ENCODE measurements at regions of chr20 and their contacts with region 1.

Region 1: DNA sequence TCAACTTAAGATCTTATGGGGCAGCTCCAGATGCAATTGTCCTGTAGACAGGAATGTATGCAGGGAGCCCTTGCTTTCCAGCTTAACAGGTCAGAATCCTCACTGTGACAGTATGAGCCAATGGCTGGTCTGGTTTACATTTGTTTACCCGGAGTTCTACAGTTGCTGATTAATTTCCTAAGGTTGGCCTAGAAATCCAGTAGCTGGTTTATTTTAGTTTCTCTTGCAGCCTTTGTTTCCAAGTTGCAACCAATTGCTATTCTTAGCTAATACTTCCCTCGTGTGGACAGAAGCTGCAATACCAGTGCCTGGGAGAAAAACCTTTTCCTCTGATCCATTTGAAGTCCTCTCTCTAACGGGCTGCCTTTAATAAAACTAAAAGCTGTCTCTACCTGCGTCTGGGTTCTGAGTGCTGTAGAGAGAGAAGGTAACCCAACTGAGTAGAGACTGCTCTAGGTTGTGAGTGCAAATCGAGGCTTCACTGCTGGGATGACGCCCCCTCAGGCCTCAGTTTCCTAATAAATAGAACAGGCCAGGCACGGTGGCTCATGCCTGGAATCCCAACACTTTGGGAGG is 45.9 kb downstream of the ZNF217 start:
- DNase-seq: peak; percentile 28
- H3K4me3 Mint-ChIP-seq: no peak overlapping the region
- H3K27ac Mint-ChIP-seq: no peak overlapping the region
- H3K4me1 Mint-ChIP-seq: no peaks in the 10 kb centered on the region
- H3K27me3 Mint-ChIP-seq: no peaks in the 10 kb centered on the region

Region 2: DNA sequence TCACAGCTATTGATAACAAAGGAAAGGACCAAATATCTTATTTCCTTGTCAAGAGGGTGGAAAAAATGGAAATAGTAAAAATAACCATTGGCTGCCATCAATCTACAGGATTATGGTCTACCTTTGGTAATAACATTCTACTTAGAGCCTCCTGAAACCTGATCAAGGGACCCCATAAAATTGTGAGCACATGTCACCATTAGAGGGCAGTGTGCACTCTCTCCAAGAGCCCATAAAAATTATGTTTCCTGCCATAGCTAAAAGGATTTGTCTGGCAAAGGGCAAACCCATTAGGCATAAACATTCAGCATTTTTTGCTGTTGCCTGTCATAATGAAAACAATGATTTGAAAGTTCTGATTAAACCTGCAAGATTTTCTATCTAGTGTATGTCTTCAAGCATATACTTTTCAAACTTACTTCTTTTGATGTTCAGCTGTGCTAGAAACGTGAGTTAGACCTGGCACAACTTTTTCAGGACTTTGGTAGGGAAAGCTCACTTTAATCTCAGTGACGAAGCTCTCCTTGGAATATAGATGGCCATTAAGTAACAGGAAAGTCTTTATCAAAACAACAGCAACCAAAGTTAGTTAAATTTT is 1235.5 kb before region 1 on chr20:
- CTCF ChIA-PET with region 1: interaction called, 14 read pairs
- POLR2A ChIA-PET with region 1: no interaction called
- DNase-seq: peak; percentile 42
- H3K4me3 Mint-ChIP-seq: no peak overlapping the region
- H3K27ac Mint-ChIP-seq: no peak overlapping the region
- H3K4me1 Mint-ChIP-seq: peaks cover 3% of the 10 kb centered on the region
- H3K27me3 Mint-ChIP-seq: no peaks in the 10 kb centered on the region

Region 3: DNA sequence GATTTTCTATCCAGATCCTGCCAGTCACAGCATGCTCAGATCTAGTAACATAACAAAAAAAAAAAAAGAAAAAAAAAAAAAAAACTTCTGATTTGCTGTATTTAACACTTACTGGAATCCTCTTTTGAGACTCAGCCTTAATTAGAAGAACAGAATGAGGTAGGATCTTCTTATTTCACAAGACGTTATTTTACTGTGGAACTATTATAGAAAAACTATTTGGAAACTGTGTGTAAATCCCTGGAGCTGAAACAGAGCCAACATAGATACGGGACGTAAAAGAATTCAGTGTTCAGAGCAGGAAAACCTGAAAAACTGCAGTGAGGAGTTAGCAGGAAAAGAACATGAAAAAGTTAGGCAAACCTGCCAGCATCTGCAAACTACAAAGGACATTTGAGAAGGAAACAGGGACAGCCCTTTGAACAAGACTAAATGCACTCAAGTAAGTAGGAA is 49.3 kb after region 1 on chr20:
- CTCF ChIA-PET with region 1: no interaction called
- POLR2A ChIA-PET with region 1: no interaction called
- DNase-seq: no peak
- H3K4me3 Mint-ChIP-seq: no peak overlapping the region
- H3K27ac Mint-ChIP-seq: peak overlapping the region; percentile 83
- H3K4me1 Mint-ChIP-seq: peaks cover 46% of the 10 kb centered on the region
- H3K27me3 Mint-ChIP-seq: no peaks in the 10 kb centered on the region

Measured in activated CD4-positive, alpha-beta memory T cell treated with anti-CD3 and anti-CD28 coated beads, Interleukin-2, amount 10 ng/mL, durations not matched to agents 7 days and 5 days (primary cell).